CD4-positive, alpha-beta T cell (primary cell): ENCODE measurements at regions of chr1 and their contacts with region 1.

Region 1: DNA sequence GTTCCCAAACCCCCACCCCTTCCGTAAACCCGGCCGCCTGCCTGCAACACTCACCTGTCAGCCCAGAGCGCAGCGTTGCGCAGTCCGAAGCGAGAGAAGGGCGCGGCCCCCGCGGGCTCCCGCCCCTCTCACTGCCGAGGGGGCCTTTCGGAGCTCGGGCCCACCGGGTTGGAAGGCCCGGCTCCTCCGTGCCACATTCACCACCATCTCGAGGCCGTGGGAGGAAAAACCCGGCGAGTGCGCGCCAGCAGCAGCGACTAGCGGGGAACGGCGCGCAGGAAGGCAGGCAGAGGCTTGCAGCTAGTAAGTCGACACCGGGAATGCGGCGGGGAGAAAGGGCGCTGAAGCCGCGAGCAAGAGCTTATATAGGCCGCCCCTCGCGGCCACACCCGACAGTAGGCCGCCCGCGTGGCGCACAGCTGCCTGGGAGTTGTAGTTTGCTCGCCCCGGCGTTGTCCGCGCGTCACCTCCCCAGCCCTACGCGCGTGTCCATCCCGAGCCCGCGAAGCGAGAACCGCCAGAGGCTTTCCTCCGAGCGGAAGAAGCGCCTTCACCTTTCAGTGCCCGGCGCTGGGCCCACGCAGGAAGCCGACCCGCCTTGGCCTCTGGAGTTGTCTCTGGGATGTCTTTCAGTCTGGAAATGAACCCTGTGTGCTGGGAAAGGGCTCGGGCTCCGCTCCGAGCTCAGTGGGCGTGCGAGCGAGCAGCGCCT is 10.4 kb upstream of the RAB42 start:
- DNase-seq: peak; percentile 85 to 97 (median 92)
- ATAC-seq: peak; percentile 83
- H3K4me3 ChIP-seq: peak overlapping the region; percentile 93
- H3K4me3 Mint-ChIP-seq: peak overlapping the region; percentile 94
- H3K27ac ChIP-seq: peak overlapping the region; percentile 70 to 83
- H3K27ac Mint-ChIP-seq: peak overlapping the region; percentile 81
- H3K4me1 ChIP-seq: peaks cover 39% of the 10 kb centered on the region
- H3K4me1 Mint-ChIP-seq: peaks cover 48% of the 10 kb centered on the region
- H3K27me3 ChIP-seq: no peaks in the 10 kb centered on the region
- H3K27me3 Mint-ChIP-seq: no peaks in the 10 kb centered on the region
- CTCF ChIP-seq: no peak

Region 2: GRCh38 chr1:28505406-28506187 is 76.1 kb before region 1 on chr1 and contains the start of gene RCC1:
- CTCF ChIA-PET with region 1: interaction called, 12 read pairs
- POLR2A ChIA-PET with region 1: interaction called, 111 read pairs
- intact Hi-C with region 1: loop called (anchors 2 kb)
- DNase-seq: peak; percentile 86 to 99 (median 92)
- ATAC-seq: peak; percentile 92
- H3K4me3 ChIP-seq: peak within 1 kb of the TSS; percentile 86
- H3K4me3 Mint-ChIP-seq: peak within 1 kb of the TSS; percentile 94
- H3K27ac ChIP-seq: peak within 1 kb of the TSS; percentile 65 to 79
- H3K27ac Mint-ChIP-seq: peak within 1 kb of the TSS; percentile 88
- H3K4me1 ChIP-seq: peaks cover 38% of the 10 kb centered on the region
- H3K4me1 Mint-ChIP-seq: peaks cover 49% of the 10 kb centered on the region
- H3K27me3 ChIP-seq: no peaks in the 10 kb centered on the region
- H3K27me3 Mint-ChIP-seq: no peaks in the 10 kb centered on the region
- CTCF ChIP-seq: no peak
- total RNA-seq, gene RCC1: 8.5 to 9.9 TPM

Region 3: GRCh38 chr1:28552758-28553663 is 28.7 kb before region 1 on chr1 and contains the start of gene TRNAU1AP:
- CTCF ChIA-PET with region 1: interaction called, 19 read pairs
- POLR2A ChIA-PET with region 1: interaction called, 138 read pairs
- intact Hi-C with region 1: loop called (anchors 1 kb)
- DNase-seq: peak; percentile 94 to 99 (median 96)
- ATAC-seq: peak; percentile 95
- H3K4me3 ChIP-seq: peak within 1 kb of the TSS; percentile 84
- H3K4me3 Mint-ChIP-seq: peak within 1 kb of the TSS; percentile 99
- H3K27ac ChIP-seq: peak within 1 kb of the TSS; percentile 66 to 68
- H3K27ac Mint-ChIP-seq: peak within 1 kb of the TSS; percentile 99
- H3K4me1 ChIP-seq: peaks cover 22% of the 10 kb centered on the region
- H3K4me1 Mint-ChIP-seq: peaks cover 31% of the 10 kb centered on the region
- H3K27me3 ChIP-seq: no peaks in the 10 kb centered on the region
- H3K27me3 Mint-ChIP-seq: no peaks in the 10 kb centered on the region
- CTCF ChIP-seq: no peak
- total RNA-seq, gene TRNAU1AP: 21.4 to 24.2 TPM

Region 4: DNA sequence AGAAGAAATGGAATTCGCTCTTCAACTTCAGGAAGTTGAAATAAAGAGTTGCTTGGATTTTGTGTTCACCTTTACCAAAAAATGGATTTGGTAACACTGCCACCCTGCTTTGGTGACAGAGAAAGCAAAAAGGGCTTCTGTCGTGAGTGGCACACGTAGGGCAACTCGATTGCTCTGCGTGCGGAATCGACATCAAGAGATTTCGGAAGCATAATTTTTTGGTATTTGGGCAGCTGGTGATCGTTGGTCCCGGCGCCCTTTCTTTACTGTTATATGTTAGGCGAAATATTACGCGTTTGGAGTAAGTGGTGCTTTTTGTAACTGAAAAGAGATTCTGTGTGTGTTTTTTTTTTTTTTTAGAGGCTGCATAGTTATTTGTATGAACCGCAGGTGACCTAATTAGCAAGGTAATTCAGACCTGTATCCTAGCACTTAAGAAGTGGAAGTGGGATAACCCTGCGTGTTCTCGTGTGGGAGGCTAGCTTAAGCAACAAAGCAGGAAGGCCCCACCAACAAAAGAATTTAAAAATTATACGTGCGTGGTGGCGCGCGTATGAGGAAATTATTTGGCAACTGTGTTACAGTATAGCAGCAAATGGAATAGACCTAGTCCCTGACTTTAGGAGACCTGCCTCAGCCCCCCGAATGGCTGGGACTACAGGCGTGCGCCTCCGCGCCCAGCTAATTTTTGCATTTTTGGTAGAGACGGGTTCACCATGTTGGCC is 66.9 kb after region 1 on chr1 and contains the start of gene RNU11:
- CTCF ChIA-PET with region 1: interaction called, 11 read pairs
- POLR2A ChIA-PET with region 1: interaction called, 107 read pairs
- intact Hi-C with region 1: loop called (anchors 1 kb)
- DNase-seq: peak; percentile 77 to 97 (median 85)
- ATAC-seq: peak; percentile 67
- H3K4me3 ChIP-seq: peak within 1 kb of the TSS; percentile 50
- H3K4me3 Mint-ChIP-seq: peak within 1 kb of the TSS; percentile 78
- H3K27ac ChIP-seq: peak within 1 kb of the TSS; percentile 88 to 93
- H3K27ac Mint-ChIP-seq: peak within 1 kb of the TSS; percentile 96
- H3K4me1 ChIP-seq: peaks cover 36% of the 10 kb centered on the region
- H3K4me1 Mint-ChIP-seq: peaks cover 32% of the 10 kb centered on the region
- H3K27me3 ChIP-seq: no peaks in the 10 kb centered on the region
- H3K27me3 Mint-ChIP-seq: no peaks in the 10 kb centered on the region
- CTCF ChIP-seq: no peak
- total RNA-seq, gene RNU11: not detected

Region 5: DNA sequence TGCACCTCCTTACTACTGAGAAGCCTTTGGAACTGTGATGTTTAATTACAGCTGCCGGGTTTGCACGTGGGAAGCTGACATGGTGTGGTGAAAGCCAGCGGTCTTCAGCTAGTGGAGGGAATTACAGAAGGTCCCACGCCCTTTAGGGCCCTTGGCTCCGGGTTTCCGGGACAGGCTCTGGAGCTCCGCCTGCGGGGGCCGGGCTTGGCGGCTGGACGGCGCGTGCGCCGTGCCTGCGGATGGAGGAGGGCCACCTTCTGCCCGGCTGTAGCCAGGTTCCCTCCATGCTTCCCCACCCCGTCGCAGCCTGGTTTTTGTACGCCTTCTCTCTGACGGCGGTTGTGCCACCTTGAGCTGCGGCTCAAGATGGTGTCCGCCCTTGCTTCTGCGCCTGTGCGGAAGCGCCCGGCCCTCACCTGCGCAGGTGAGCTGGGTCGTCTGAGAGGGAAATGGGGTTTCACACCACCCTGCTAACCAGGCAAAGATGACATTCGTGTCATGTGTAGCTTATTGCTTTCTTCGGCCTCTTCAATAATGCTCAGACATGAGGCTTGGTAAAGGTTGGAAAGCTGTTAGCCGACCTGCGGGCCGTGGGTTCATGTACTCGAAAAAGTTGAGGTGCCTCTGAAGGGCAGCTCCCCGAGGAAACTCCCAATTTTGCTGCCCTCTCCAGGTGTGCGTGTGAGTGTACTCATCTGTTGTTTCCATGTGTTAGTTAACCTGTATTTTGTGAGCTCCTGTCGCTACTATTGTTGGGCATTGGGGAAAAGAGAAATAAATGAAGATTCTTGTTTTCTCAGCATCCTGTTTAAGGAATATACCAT is 193.6 kb after region 1 on chr1:
- CTCF ChIA-PET with region 1: no interaction called
- POLR2A ChIA-PET with region 1: interaction called, 11 read pairs
- intact Hi-C with region 1: no loop called
- DNase-seq: peak; percentile 39 to 89 (median 66)
- ATAC-seq: peak; percentile 93
- H3K4me3 ChIP-seq: peak overlapping the region; percentile 54
- H3K4me3 Mint-ChIP-seq: peak overlapping the region; percentile 88
- H3K27ac ChIP-seq: peak overlapping the region; percentile 26 to 38
- H3K27ac Mint-ChIP-seq: peak overlapping the region; percentile 90
- H3K4me1 ChIP-seq: peaks cover 14% of the 10 kb centered on the region
- H3K4me1 Mint-ChIP-seq: peaks cover 13% of the 10 kb centered on the region
- H3K27me3 ChIP-seq: no peaks in the 10 kb centered on the region
- H3K27me3 Mint-ChIP-seq: no peaks in the 10 kb centered on the region
- CTCF ChIP-seq: no peak